PC-9 (cell line): ENCODE measurements at regions of chr17 and their contacts with region 1.

Region 1: GRCh38 chr17:14926526-14927122 is 338.5 kb downstream of the PMP22 start:
- DNase-seq: peak in 1 of 2 experiments; percentile 25
- H3K4me3 ChIP-seq: no peak overlapping the region
- H3K27ac ChIP-seq: no peak overlapping the region
- H3K4me1 ChIP-seq: no peaks in the 10 kb centered on the region
- H3K27me3 ChIP-seq: 0 out of 2 replicates have a peak, but pooled peaks cover 5% of the 10 kb centered on the region
- CTCF ChIP-seq: peak; percentile 74

Region 2: GRCh38 chr17:13337864-13338371 is 1588.7 kb before region 1 on chr17:
- CTCF ChIA-PET with region 1: no interaction called
- POLR2A ChIA-PET with region 1: no interaction called
- intact Hi-C with region 1: loop called (anchors 5 kb)
- DNase-seq: peak in 1 of 2 experiments; percentile 3
- H3K4me3 ChIP-seq: no peak overlapping the region
- H3K27ac ChIP-seq: no peak overlapping the region
- H3K4me1 ChIP-seq: no peaks in the 10 kb centered on the region
- H3K27me3 ChIP-seq: no peaks in the 10 kb centered on the region
- CTCF ChIP-seq: peak; percentile 63

Region 3: GRCh38 chr17:13597723-13598347 is 1328.8 kb before region 1 on chr17:
- CTCF ChIA-PET with region 1: no interaction called
- POLR2A ChIA-PET with region 1: no interaction called
- intact Hi-C with region 1: loop called (anchors 1 kb)
- DNase-seq: peak in 1 of 2 experiments; percentile 5
- H3K4me3 ChIP-seq: no peak overlapping the region
- H3K27ac ChIP-seq: no peak overlapping the region
- H3K4me1 ChIP-seq: no peaks in the 10 kb centered on the region
- H3K27me3 ChIP-seq: no peaks in the 10 kb centered on the region
- CTCF ChIP-seq: peak; percentile 47; the same call in 1 of the 2 replicates

Region 4: GRCh38 chr17:14316150-14316785 is 610.4 kb before region 1 on chr17:
- CTCF ChIA-PET with region 1: no interaction called
- POLR2A ChIA-PET with region 1: no interaction called
- intact Hi-C with region 1: loop called (anchors 10 kb)
- DNase-seq: no peak
- H3K4me3 ChIP-seq: no peak overlapping the region
- H3K27ac ChIP-seq: no peak overlapping the region
- H3K4me1 ChIP-seq: no peaks in the 10 kb centered on the region
- H3K27me3 ChIP-seq: peaks cover 65% of the 10 kb centered on the region
- CTCF ChIP-seq: no peak

Region 5: DNA sequence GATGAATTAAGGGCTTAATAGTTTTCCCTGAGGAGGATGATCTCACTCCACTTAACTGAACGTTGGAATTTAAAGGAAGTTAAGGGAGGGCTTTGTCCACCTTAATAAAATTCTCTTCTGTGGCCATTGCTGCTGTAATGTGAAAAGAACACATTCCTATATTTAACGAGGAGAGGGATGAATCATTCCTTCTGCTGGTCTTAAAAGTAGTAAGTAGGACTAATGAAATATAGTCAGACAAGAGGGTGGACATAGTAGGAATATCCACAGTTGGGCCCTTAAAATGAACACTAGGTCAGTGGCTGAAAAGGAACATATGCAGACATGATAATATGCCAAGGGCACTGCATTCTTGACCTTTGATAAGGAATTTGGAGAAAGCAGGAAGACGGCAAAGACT is 67.1 kb before region 1 on chr17:
- CTCF ChIA-PET with region 1: no interaction called
- POLR2A ChIA-PET with region 1: no interaction called
- intact Hi-C with region 1: no loop called
- DNase-seq: no peak
- H3K4me3 ChIP-seq: no peak overlapping the region
- H3K27ac ChIP-seq: no peak overlapping the region
- H3K4me1 ChIP-seq: no peaks in the 10 kb centered on the region
- H3K27me3 ChIP-seq: no peaks in the 10 kb centered on the region
- CTCF ChIP-seq: no peak

Region 6: DNA sequence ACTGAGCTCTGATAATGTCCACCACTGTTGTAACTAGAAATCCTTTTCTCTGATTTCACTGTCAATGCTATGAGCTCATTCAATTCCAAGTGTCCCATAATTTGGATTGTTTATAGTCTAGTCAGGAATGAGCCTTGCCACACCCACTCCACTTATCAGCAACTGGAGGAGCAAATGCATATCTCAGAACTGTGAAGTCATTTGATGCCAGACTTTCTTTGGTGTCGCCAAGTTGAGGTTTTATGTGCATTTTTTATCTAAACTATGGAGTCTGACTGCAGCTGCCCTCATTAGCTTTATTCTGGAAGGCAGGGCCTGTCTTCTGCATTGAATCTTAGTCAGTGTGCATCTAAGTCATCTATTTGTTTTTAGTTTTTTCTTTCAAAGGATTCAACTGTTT is 22.8 kb before region 1 on chr17:
- CTCF ChIA-PET with region 1: no interaction called
- POLR2A ChIA-PET with region 1: no interaction called
- intact Hi-C with region 1: no loop called
- DNase-seq: no peak
- H3K4me3 ChIP-seq: no peak overlapping the region
- H3K27ac ChIP-seq: no peak overlapping the region
- H3K4me1 ChIP-seq: no peaks in the 10 kb centered on the region
- H3K27me3 ChIP-seq: no peaks in the 10 kb centered on the region
- CTCF ChIP-seq: no peak